Tibial artery (tissue), 4 donors: ENCODE measurements at regions of chr12 and their contacts with region 1.

Region 1: DNA sequence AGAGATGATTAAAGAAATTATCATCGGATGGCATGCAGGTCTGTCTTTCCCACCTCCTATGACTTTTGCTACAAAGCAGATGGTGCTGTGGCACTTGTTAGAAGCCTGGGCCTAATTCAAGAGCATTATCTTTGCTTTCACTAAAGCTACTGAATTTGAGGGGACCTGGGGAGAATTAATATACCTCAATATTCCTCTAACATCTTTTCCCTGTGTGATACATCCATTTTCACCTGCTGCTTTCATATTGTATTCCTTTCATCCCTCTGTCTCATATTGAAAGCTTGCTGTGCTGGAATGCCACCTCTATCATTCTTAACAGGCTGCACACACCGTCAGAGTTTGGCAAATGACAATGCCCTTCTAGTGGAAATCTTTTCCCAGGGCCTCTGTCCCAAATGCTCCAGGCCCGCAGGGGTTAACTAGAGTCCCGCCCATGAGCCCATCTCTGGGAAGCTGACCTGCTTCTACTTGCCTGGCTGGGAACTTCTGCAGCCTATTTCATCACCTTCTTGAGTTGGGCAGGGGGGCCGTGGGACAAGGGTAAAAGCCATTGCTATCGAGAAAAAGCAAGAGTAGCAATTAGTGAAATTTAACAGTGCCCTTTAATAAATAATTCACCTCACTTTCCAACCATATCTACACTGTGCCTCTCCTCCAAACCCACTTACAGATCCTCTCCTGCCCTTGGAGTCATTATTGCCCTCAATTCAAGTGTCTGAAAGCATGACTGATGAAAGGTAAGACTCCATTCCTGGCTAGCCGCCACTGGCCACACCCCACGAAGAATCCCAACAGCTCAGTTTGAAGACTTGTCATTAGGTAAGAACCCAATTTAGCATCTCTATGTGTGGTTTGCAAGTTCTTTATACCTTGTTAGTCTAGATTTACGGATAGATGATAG is 126.7 kb upstream of the BTG1 start:
- DNase-seq: no peak
- H3K4me3 ChIP-seq: no peak overlapping the region
- H3K27ac ChIP-seq: no peak overlapping the region
- H3K4me1 ChIP-seq: no peaks in the 10 kb centered on the region
- H3K27me3 ChIP-seq: no peaks in the 10 kb centered on the region
- CTCF ChIP-seq: no peak

Region 2: DNA sequence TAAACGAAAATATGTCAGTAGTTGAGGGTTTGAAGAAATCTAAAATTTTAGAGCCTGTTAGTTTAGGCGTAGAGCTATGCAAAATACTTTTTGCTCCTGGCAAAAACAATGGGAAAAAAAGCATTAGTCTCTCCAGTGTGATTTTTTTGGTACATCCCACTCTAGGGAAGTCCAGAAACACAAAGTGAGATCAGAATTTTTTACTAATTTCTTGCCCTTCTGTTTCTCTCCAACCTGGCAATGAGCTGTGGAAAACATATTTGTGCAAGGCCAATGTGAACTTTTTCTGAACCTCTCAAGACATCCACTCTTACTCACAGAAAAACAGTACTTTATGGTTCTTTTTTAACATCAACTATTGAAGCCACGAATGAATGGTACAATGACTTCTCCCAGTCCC is 1032.8 kb before region 1 on chr12:
- intact Hi-C with region 1: no loop called
- DNase-seq: no peak
- H3K4me3 ChIP-seq: no peak overlapping the region
- H3K27ac ChIP-seq: peak overlapping the region in 1 of 2 donors; percentile 36
- H3K4me1 ChIP-seq: peaks cover 0 to 15% (median 5%) of the 10 kb centered on the region in 4 donors
- H3K27me3 ChIP-seq: no peaks in the 10 kb centered on the region
- CTCF ChIP-seq: no peak

Region 3: DNA sequence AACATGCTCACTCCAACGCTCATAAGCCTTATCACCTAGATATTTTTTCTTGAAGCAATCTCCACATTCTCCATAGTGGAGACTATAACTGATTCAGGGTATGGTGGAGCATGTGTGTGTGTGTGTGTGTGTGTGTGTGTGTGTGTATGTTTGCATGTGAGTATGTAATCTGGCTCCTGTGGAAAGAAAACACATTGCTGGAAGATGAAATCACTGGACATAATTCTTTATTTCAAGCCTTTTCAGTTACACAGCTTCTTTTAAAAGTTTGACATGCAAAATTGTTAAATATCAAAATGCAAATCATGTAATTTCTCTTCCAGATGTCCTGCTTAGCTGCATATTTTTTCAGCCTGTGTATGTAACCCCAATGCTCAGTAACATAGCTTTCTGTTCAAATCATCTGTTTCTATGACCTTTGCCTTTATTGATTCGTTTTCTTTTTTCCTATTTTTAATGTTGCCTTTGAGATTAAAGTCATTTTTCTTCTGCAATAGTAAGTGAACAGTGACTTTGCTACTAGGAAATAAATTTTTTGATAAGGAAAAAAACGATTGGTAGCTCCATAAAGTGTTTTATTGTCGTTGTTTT is 46.1 kb before region 1 on chr12:
- intact Hi-C with region 1: loop called (anchors 2 kb)
- DNase-seq: no peak
- H3K4me3 ChIP-seq: no peak overlapping the region
- H3K27ac ChIP-seq: no peak overlapping the region
- H3K4me1 ChIP-seq: peaks cover 0 to 21% (median 0%) of the 10 kb centered on the region in 4 donors
- H3K27me3 ChIP-seq: no peaks in the 10 kb centered on the region
- CTCF ChIP-seq: no peak